ENCODE measurements at regions of chr20 and their contacts with region 1.

Region 1: GRCh38 chr20:36267581-36268381 is 31.5 kb downstream of the AAR2 start:
- DNase-seq: peak in 1 of 2 experiments; percentile 43
- H3K4me3 ChIP-seq: no peak overlapping the region
- H3K4me3 Mint-ChIP-seq: no peak overlapping the region
- H3K27ac Mint-ChIP-seq: no peak overlapping the region
- H3K4me1 ChIP-seq: no peaks in the 10 kb centered on the region
- H3K4me1 Mint-ChIP-seq: no peaks in the 10 kb centered on the region
- H3K27me3 ChIP-seq: no peaks in the 10 kb centered on the region; the same call in 1 of the 2 replicates
- H3K27me3 Mint-ChIP-seq: peaks cover 2% of the 10 kb centered on the region
- CTCF ChIP-seq: peak in 1 of 2 experiments; percentile 2

Region 2: DNA sequence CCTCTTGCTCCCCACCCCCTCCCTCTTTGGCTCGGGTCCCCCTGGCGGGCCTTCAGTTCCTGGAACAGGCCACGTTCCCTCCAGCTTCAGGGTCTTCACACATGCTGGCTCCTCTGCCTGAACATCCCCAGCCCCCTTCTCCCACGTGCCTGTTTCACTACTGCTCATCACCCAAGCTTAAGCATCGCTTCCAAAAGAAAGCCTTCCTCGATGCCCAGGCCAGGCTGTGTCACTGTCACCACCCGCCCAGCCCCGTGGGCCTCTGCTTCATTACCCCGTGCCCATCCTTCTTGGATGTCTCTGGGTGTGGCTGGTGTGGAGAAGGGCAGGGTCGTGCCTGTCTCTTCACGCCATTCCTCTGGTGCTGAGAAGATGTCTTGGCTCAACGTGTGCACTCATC is 41.2 kb after region 1 on chr20:
- CTCF ChIA-PET with region 1: interaction called, 10 read pairs
- POLR2A ChIA-PET with region 1: no interaction called
- intact Hi-C with region 1: no loop called
- DNase-seq: peak in 1 of 2 experiments; percentile 38
- H3K4me3 ChIP-seq: no peak overlapping the region
- H3K4me3 Mint-ChIP-seq: no peak overlapping the region
- H3K27ac Mint-ChIP-seq: no peak overlapping the region
- H3K4me1 ChIP-seq: peaks cover 5% of the 10 kb centered on the region; the same call in 1 of the 2 replicates
- H3K4me1 Mint-ChIP-seq: no peaks in the 10 kb centered on the region
- H3K27me3 ChIP-seq: peaks cover 7% of the 10 kb centered on the region
- H3K27me3 Mint-ChIP-seq: peaks cover 29% of the 10 kb centered on the region
- CTCF ChIP-seq: no peak